Common myeloid progenitor, CD34-positive (primary cell): ENCODE measurements at regions of chr22 and their contacts with region 1.

Region 1: GRCh38 chr22:38872172-38872830 is at the start of gene CBX6:
- DNase-seq: peak; percentile 92 to 96 (median 95)
- H3K4me3 ChIP-seq: peak within 1 kb of the TSS; percentile 64 to 87 (median 84)
- H3K27ac ChIP-seq: peak within 1 kb of the TSS; percentile 72 to 82
- H3K4me1 ChIP-seq: peaks cover 5 to 37% (median 25%) of the 10 kb centered on the region in 4 experiments
- H3K27me3 ChIP-seq: peaks cover 0 to 4% (median 0%) of the 10 kb centered on the region in 5 experiments

Region 2: DNA sequence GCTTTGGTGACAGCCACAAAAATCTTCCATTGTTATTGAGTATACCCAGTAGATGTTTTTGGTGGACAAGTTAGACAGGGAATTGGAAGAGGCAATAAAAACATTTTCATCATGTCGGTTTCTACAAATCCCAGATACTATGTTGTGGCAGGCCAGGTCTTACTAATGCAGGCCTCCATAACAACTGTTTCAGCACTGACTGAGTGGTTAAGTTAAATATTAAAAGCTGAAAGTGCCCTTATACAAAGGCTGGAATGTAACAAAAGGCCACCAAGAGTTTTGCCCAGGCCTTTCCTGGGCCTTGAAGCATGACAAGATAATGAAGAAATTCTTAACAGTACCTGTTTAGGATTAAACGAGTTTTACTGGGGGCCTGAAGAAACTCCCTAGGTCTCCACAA is 331.6 kb before region 1 on chr22:
- CTCF ChIA-PET with region 1: no interaction called
- POLR2A ChIA-PET with region 1: no interaction called
- DNase-seq: no peak
- H3K4me3 ChIP-seq: no peak overlapping the region
- H3K27ac ChIP-seq: no peak overlapping the region
- H3K4me1 ChIP-seq: no peaks in the 10 kb centered on the region
- H3K27me3 ChIP-seq: no peaks in the 10 kb centered on the region

Region 3: GRCh38 chr22:38850941-38851849 is 21.1 kb before region 1 on chr22:
- CTCF ChIA-PET with region 1: interaction called, 10 read pairs
- POLR2A ChIA-PET with region 1: no interaction called
- DNase-seq: no peak
- H3K4me3 ChIP-seq: no peak overlapping the region
- H3K27ac ChIP-seq: no peak overlapping the region
- H3K4me1 ChIP-seq: no peaks in the 10 kb centered on the region
- H3K27me3 ChIP-seq: peaks cover 0 to 5% (median 2%) of the 10 kb centered on the region in 5 experiments

Region 4: GRCh38 chr22:38927033-38927781 is 54.9 kb after region 1 on chr22:
- CTCF ChIA-PET with region 1: interaction called, 16 read pairs
- POLR2A ChIA-PET with region 1: no interaction called
- DNase-seq: peak; percentile 67 to 74 (median 74)
- H3K4me3 ChIP-seq: peak overlapping the region in 2 of 7 experiments; percentile 36 to 45
- H3K27ac ChIP-seq: no peak overlapping the region
- H3K4me1 ChIP-seq: peaks cover 0 to 12% (median 0%) of the 10 kb centered on the region in 4 experiments
- H3K27me3 ChIP-seq: peaks cover 0 to 24% (median 4%) of the 10 kb centered on the region in 5 experiments

Region 5: DNA sequence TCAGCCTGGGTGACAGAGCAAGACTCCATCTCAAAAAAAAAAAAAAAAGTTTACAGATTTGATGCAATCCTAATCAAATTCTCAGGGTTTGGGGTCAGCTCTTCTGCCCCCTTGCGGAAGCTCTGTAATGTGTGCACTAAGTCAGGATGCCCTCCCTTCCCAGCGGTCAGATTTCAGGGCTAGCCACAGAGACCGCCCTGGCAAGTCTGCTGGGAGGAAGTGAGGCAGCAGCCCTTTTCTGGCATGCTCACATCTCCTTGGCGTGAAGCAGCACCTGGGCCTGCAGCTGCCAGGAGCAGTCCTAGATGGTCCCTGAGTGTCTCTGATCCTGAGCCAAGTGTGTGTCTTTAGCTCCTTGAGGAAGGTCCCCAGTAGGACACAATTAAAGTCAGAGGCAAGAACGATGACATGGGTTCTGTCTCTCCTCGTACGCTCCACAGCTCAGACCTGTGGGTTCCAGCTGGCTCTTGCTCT is 130.9 kb after region 1 on chr22:
- CTCF ChIA-PET with region 1: interaction called, 51 read pairs
- POLR2A ChIA-PET with region 1: interaction called, 7 read pairs
- DNase-seq: peak; percentile 92 to 97 (median 95)
- H3K4me3 ChIP-seq: no peak overlapping the region
- H3K27ac ChIP-seq: no peak overlapping the region
- H3K4me1 ChIP-seq: peaks cover 0 to 8% (median 5%) of the 10 kb centered on the region in 4 experiments
- H3K27me3 ChIP-seq: peaks cover 0 to 9% (median 0%) of the 10 kb centered on the region in 5 experiments